Dendritic cell treated with granulocyte-macrophage colony-stimulating factor and Interleukin-4, amounts not matched to agents 40 ng/mL and 50 ng/mL, for 4 days (primary cell): ENCODE measurements at regions of chr20 and their contacts with region 1.

Region 1: GRCh38 chr20:37336369-37337207 is 9.4 kb upstream of the SRC start:
- H3K4me3 Mint-ChIP-seq: peak overlapping the region; percentile 57
- H3K27ac Mint-ChIP-seq: peak overlapping the region; percentile 91
- H3K4me1 Mint-ChIP-seq: peaks cover 62% of the 10 kb centered on the region
- H3K27me3 Mint-ChIP-seq: peaks cover 3% of the 10 kb centered on the region

Region 2: GRCh38 chr20:37316116-37316774 is 20.3 kb before region 1 on chr20:
- intact Hi-C with region 1: loop called (anchors 2 kb)
- H3K4me3 Mint-ChIP-seq: no peak overlapping the region
- H3K27ac Mint-ChIP-seq: peak overlapping the region; percentile 87
- H3K4me1 Mint-ChIP-seq: peaks cover 71% of the 10 kb centered on the region
- H3K27me3 Mint-ChIP-seq: no peaks in the 10 kb centered on the region

Region 3: GRCh38 chr20:37406010-37406998 is 69.7 kb after region 1 on chr20:
- intact Hi-C with region 1: no loop called
- H3K4me3 Mint-ChIP-seq: peak overlapping the region; percentile 65
- H3K27ac Mint-ChIP-seq: no peak overlapping the region
- H3K4me1 Mint-ChIP-seq: peaks cover 34% of the 10 kb centered on the region
- H3K27me3 Mint-ChIP-seq: peaks cover 35% of the 10 kb centered on the region

Region 4: DNA sequence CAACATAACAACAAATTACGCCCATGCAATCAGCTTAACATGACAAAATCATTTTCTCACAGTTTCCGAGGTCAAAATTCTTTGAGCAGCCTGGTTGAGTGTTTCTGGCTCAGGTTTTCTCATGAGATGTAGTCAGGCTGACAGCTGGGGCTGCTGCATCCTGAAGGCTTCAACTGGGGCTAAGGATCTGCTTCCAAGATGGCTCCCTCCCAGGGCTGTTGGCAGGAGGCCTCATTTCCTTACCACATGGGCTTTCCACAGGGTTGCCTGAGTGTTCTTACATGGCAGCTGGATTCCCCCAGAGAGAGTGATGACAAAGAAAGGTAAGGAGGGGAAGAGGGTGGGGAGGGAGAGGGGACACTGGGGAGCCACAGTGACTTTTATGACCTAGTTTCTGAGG is 121.3 kb after region 1 on chr20:
- intact Hi-C with region 1: no loop called
- H3K4me3 Mint-ChIP-seq: no peak overlapping the region
- H3K27ac Mint-ChIP-seq: no peak overlapping the region
- H3K4me1 Mint-ChIP-seq: no peaks in the 10 kb centered on the region
- H3K27me3 Mint-ChIP-seq: peaks cover 17% of the 10 kb centered on the region